Endothelial cell of umbilical vein (primary cell): ENCODE measurements at regions of chrX and their contacts with region 1.

Region 1: DNA sequence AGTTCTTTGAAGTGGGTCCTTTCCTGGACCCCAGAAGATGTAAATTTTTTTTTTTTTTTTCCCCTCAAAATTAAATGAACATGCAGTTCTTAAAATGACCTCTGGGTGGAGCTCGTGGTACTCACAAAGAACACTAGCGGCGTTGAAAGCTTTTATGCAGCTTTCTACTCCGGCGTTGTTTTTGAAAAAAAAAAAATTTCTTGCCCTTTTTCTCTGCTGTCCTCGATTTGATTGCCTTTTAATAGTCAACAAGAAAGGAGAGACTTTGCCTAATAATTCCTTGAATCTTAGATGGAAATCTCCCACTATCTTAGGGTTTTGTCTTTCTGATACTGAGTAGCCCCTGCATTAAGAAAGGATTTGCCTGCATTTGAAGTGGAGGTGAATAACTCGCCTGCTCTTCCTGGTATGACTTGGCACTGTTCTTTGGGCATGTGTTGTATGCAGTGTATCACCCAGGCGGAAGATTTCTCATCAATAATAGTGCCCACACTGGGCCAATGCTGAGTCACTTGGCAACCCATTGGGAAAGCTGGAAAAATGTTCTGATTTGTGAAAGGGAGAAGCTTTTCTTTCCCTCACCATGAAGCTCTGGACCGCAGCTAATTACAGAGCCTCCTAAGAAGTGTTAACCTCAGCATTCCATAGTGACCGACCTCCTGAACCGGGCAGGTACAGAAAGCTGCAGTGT is 104.0 kb downstream of the PHEX start:
- DNase-seq: peak; percentile 75
- H3K4me3 ChIP-seq: no peak overlapping the region
- H3K27ac ChIP-seq: peak overlapping the region; percentile 61
- H3K4me1 ChIP-seq: peaks cover 18% of the 10 kb centered on the region
- H3K27me3 ChIP-seq: no peaks in the 10 kb centered on the region
- CTCF ChIP-seq: peak; percentile 27 to 32
- POLR2A ChIP-seq: no peak

Region 2: GRCh38 chrX:21985332-21985777 is 150.8 kb before region 1 on chrX:
- CTCF ChIA-PET with region 1: interaction called, 20 read pairs
- POLR2A ChIA-PET with region 1: no interaction called
- dilution Hi-C with region 1: no loop called
- intact Hi-C with region 1: loop called (anchors 1 kb)
- DNase-seq: peak; percentile 83
- H3K4me3 ChIP-seq: no peak overlapping the region
- H3K27ac ChIP-seq: no peak overlapping the region
- H3K4me1 ChIP-seq: no peaks in the 10 kb centered on the region
- H3K27me3 ChIP-seq: no peaks in the 10 kb centered on the region
- CTCF ChIP-seq: peak; percentile 61 to 67
- POLR2A ChIP-seq: no peak

Region 3: GRCh38 chrX:22093550-22093949 is 42.6 kb before region 1 on chrX:
- CTCF ChIA-PET with region 1: no interaction called
- POLR2A ChIA-PET with region 1: no interaction called
- dilution Hi-C with region 1: no loop called
- intact Hi-C with region 1: loop called (anchors 2 kb)
- DNase-seq: peak; percentile 64
- H3K4me3 ChIP-seq: no peak overlapping the region
- H3K27ac ChIP-seq: no peak overlapping the region
- H3K4me1 ChIP-seq: peaks cover 5% of the 10 kb centered on the region
- H3K27me3 ChIP-seq: no peaks in the 10 kb centered on the region
- CTCF ChIP-seq: no peak
- POLR2A ChIP-seq: no peak

Region 4: GRCh38 chrX:22192417-22193060 is 56.4 kb after region 1 on chrX:
- CTCF ChIA-PET with region 1: interaction called, 9 read pairs
- POLR2A ChIA-PET with region 1: no interaction called
- dilution Hi-C with region 1: no loop called
- intact Hi-C with region 1: loop called (anchors 1 kb)
- DNase-seq: peak; percentile 46
- H3K4me3 ChIP-seq: no peak overlapping the region
- H3K27ac ChIP-seq: no peak overlapping the region
- H3K4me1 ChIP-seq: no peaks in the 10 kb centered on the region
- H3K27me3 ChIP-seq: no peaks in the 10 kb centered on the region
- CTCF ChIP-seq: peak; percentile 56
- POLR2A ChIP-seq: no peak

Region 5: DNA sequence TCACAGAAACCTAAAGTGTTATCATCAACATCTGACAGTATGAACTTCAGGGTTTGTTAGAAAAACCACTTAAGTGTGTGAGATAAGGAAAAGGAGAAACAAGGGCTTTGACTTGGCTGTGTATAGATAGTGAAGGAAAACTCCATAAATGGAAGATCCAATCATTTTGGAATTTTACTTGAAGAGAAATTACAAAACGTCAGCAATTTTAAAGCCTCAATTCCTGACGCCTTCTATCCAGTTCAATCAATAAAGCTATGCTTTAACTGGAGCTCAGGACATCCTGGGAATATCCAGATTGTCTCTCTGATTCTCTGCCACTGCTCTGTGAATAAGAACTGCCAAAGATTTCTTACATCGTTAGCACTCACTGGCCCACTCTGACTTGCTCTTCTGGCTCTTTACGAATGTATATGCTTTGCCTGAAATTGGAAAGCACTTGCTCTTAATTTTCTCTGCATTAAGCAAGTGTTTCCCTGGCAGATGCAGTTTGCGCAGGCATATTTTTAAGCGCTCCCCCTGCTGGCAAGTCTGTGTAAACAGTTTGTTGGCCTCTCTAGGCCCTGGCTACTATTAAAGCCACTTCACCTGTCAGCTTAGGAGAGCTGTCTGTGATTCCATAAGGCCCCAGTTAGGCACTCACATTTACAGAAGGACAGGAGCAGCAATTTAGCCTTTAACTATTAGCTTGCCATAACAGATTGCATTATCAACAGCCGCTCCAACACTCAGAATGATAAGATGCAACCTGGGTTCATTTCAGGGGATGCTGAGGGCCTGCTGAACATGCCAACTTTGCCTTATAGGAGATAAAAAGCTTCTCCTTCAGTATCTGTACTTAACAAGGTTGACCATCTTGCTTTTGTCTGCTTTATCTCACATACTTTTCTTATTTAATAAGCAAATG is 612.2 kb after region 1 on chrX:
- CTCF ChIA-PET with region 1: interaction called, 38 read pairs
- POLR2A ChIA-PET with region 1: no interaction called
- dilution Hi-C with region 1: no loop called
- intact Hi-C with region 1: loop called (anchors 1 kb)
- DNase-seq: peak; percentile 46
- H3K4me3 ChIP-seq: no peak overlapping the region
- H3K27ac ChIP-seq: no peak overlapping the region
- H3K4me1 ChIP-seq: no peaks in the 10 kb centered on the region
- H3K27me3 ChIP-seq: no peaks in the 10 kb centered on the region
- CTCF ChIP-seq: peak; percentile 54 to 62
- POLR2A ChIP-seq: no peak

Region 6: DNA sequence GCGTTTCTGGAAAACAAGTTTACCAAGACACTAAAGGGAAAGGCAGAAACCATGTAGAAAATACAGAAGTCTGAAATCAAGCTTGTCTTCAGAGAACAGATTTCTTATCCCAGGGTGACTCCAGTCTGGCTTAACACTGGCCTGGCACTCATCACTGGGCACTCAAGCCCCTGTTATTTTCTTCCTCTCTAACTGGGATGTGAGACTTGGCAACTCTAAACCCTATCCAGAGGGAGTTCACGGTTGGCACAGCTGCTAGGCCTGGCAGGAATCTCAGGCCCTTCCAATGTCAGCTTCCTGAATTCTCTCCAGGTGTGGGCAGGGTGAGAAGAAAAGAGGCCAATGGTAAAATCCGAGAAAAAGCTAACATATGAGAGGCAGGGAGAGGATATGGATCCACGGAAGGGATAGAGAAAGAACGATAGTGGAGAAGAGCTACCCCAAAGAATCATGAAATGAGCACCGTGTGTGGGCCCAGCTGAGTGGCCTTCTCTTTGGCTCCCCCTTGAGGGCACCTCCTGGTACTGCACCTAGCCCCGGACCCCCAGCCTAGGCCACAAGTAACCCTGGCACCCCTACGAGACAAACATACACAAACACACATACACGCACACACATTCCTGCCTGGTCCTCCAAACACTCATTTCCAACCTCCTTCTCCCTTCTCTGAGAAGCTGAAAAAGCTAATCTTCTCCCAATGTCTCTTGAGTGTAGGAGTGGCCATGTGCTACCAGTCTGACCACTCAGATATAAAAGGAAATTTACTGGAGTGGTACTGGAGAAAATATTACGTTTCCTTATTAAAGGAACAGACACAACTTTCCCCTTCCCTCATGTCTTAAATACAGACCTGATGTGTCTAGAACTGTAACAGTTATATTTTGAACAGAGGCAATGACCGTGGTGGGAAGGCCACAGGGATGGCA is 1181.9 kb after region 1 on chrX:
- CTCF ChIA-PET with region 1: interaction called, 35 read pairs
- POLR2A ChIA-PET with region 1: no interaction called
- dilution Hi-C with region 1: no loop called
- intact Hi-C with region 1: loop called (anchors 2 kb)
- DNase-seq: peak; percentile 19
- H3K4me3 ChIP-seq: no peak overlapping the region
- H3K27ac ChIP-seq: no peak overlapping the region
- H3K4me1 ChIP-seq: no peaks in the 10 kb centered on the region
- H3K27me3 ChIP-seq: no peaks in the 10 kb centered on the region
- CTCF ChIP-seq: peak; percentile 59 to 86
- POLR2A ChIP-seq: no peak